Activated T-helper 1 cell treated with anti-CD3 and anti-CD28 coated beads, Interleukin-12 subunit alpha, Interleukin-12 subunit beta, Interleukin-2, Interleukin-4 antibody, amounts not matched to agents 30 ng/mL and 10 ng/mL and 1 ng/mL, durations not matched to agents 14 hours and 24 hours and 36 hours (primary cell): ENCODE measurements at regions of chrX and their contacts with region 1.

Region 1: GRCh38 chrX:17535229-17535628 is 160.2 kb downstream of the NHS start:
- DNase-seq: peak; percentile 6
- H3K4me3 Mint-ChIP-seq: no peak overlapping the region
- H3K27ac Mint-ChIP-seq: no peak overlapping the region
- H3K4me1 Mint-ChIP-seq: peaks cover 10% of the 10 kb centered on the region
- H3K27me3 Mint-ChIP-seq: peaks cover 1% of the 10 kb centered on the region

Region 2: DNA sequence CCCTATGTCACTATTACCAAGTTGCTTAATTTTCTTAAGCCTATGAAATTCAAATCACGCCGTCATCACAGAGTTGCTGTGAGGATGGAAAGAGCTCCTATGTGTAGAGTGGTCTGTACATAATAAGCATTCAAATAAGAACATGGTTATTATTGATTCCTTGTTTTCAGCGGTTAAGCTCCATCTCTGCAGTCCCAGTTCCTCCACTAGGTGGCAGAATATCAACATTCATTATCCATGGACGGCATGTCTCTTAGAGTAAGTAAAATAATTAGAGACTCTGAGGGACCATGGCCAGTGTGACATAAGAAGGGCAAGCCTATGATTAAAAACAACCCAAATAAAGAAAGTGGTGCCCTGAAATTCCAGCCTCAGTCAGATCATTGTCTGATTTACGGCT is 292.8 kb before region 1 on chrX:
- intact Hi-C with region 1: loop called (anchors 5 kb)
- DNase-seq: no peak
- H3K4me3 Mint-ChIP-seq: no peak overlapping the region
- H3K27ac Mint-ChIP-seq: no peak overlapping the region
- H3K4me1 Mint-ChIP-seq: no peaks in the 10 kb centered on the region
- H3K27me3 Mint-ChIP-seq: no peaks in the 10 kb centered on the region

Region 3: GRCh38 chrX:17580539-17581152 is 45.4 kb after region 1 on chrX:
- intact Hi-C with region 1: no loop called
- DNase-seq: no peak
- H3K4me3 Mint-ChIP-seq: no peak overlapping the region
- H3K27ac Mint-ChIP-seq: no peak overlapping the region
- H3K4me1 Mint-ChIP-seq: no peaks in the 10 kb centered on the region
- H3K27me3 Mint-ChIP-seq: peaks cover 4% of the 10 kb centered on the region

Region 4: GRCh38 chrX:17590892-17591740 is 55.9 kb after region 1 on chrX:
- intact Hi-C with region 1: loop called (anchors 1 kb)
- DNase-seq: peak; percentile 6
- H3K4me3 Mint-ChIP-seq: no peak overlapping the region
- H3K27ac Mint-ChIP-seq: no peak overlapping the region
- H3K4me1 Mint-ChIP-seq: peaks cover 23% of the 10 kb centered on the region
- H3K27me3 Mint-ChIP-seq: no peaks in the 10 kb centered on the region

Region 5: DNA sequence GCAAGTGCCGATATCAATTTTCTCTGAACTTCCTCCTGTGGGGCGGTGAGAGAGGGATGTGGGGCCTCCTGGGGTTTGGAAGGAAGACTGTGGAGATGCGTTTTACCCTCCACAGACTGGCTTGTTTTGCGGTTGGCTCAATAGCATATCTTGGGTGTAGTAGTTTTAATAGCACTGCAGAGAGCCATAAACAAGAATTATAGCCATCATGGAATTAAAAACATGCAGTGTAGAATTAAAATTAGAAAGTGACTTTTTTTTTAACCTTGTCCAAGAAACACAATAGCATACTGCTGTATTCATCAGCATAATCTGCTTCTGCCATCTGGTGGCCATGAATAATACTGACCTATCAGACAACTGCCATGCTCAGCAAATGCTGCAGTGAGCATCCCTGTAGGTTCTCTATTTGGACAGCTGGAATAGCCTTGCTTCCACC is 154.8 kb after region 1 on chrX:
- intact Hi-C with region 1: loop called (anchors 1 kb)
- DNase-seq: peak; percentile 7
- H3K4me3 Mint-ChIP-seq: no peak overlapping the region
- H3K27ac Mint-ChIP-seq: no peak overlapping the region
- H3K4me1 Mint-ChIP-seq: no peaks in the 10 kb centered on the region
- H3K27me3 Mint-ChIP-seq: peaks cover 2% of the 10 kb centered on the region

Region 6: DNA sequence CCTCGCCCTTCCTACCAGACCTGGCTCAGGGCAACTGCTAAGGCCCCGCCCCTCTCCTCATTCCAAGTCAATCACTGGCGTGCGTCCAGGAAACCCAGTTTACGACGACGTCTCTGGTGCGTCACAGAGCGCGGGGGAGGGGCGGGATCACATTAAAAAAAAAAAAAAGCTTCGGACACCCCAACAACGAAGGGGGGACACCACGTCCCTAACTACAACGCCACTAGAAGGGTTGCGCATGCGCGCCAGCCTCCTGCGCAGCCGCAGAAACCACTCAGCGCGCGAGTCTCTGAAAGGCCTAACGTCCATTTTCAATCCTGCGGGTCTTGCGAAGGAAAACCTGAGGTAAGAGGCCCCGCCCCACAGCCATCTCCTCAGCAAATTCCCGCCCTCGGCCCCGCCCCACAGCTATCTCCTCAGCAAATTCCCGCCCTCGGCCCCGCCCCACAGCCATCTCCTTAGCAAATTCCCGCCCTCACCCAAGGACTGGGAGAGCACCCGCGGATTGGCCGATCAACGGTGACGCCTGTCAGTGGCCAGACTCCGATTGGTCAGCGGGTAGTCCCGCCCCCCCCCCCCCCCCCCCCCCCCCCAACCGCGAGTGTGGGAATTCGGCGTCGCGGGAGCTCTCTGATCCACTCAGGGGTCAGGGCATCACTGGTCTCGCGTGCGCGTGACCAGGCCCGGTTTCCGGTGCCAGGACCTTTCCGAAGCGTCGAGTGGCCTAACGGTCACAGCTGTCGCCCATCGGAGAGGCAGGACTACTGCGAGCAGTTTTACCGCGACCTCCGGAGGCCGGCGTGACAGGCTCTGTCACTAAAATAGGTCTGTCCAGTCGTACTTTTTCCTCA is 201.9 kb after region 1 on chrX and contains the start of gene SCML1:
- intact Hi-C with region 1: loop called (anchors 5 kb)
- DNase-seq: peak; percentile 75
- H3K4me3 Mint-ChIP-seq: peak within 1 kb of the TSS; percentile 80
- H3K27ac Mint-ChIP-seq: peak within 1 kb of the TSS; percentile 79
- H3K4me1 Mint-ChIP-seq: peaks cover 20% of the 10 kb centered on the region
- H3K27me3 Mint-ChIP-seq: peaks cover 34% of the 10 kb centered on the region
- total RNA-seq, gene SCML1: 1.1 and 1.4 TPM in 2 replicates

Region 7: DNA sequence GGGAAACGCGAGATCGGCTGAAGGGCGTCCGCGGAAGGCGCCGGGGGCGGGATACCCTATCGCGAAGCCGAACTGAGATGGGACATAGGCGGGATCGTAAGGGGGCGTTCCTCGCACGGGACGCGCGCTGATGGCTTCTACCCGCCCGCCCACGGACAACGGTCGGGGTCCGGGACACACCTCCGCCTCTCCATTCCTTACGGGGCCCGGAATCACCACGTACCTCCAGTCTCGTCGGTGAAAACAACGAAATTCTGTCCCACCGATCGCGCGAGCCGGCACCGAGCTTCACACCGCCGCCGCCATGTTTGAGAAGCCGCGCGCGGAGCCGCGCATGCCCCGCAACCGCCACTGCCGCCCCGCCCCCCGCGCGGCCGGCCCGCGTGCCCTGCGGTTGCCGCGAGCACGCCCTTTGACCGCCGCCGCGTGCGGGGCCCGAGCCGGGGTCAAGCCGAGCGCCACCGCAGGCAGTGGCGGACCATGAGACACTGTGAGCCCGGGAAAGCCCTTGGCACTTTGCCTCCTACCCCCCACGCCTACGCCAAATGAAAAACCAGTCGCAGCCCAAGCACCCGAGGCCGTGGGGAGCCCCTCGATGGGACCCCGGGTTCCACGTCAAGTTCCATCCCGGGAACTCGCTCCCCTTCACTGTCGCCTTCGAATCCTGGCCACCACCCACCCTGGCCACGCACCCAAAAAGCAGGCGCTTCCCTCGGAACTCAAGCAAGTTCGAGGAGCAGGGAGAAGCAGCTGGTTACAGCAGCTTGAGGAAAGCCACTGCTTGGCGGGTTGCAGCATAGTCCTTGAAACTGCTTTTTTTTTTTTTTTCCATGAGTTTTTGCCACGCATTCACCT is 819.4 kb after region 1 on chrX and contains the start of gene SCML2:
- intact Hi-C with region 1: loop called (anchors 5 kb)
- DNase-seq: peak; percentile 27
- H3K4me3 Mint-ChIP-seq: peak within 1 kb of the TSS; percentile 73
- H3K27ac Mint-ChIP-seq: no peak within 1 kb of the TSS
- H3K4me1 Mint-ChIP-seq: no peaks in the 10 kb centered on the region
- H3K27me3 Mint-ChIP-seq: peaks cover 28% of the 10 kb centered on the region
- total RNA-seq, gene SCML2: 3.0 and 3.6 TPM in 2 replicates